ENCODE measurements at regions of chrX and their contacts with region 1.

Region 1: DNA sequence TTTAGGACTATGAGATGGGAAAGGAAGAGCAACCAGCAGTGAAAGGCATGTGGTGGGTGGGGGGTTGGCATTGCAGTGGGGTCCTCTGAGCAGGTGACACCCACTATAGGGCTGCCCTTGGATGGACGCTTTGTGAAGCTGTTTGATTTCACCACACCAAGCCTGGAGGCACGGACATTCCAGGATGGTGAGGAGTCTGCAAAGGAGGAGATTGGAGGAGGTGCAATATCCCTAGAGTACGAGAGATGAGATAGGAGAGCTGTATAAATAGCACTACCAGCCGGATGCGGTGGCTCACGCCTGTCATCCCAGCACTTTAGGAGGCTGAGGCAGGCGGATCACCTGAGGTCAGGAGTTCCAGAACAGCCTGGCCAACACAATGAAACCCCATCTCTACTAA is 42.3 kb downstream of the SHOX start:
- DNase-seq: no peak

Region 2: DNA sequence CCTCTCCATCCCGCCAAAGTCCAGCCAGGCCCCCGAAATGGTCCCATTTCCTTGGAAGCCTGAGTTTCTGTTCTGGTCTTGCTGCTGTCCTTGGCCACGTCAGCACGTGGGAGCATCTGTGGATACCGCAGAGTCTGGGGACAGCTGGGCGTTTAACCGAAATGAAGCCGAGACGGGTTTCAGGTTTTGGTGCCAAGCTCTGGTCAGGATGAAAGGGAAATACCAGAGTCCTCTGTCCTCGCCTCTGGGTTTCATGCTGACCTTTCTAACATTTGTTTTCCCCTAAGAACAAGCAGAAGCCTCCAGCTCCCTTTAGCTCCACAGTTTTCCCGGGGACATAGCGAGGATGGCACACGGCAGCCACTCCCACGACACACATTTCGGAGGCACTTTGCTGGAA is 22.6 kb before region 1 on chrX:
- intact Hi-C with region 1: loop called in 1 of 2 experiments (anchors 1 kb)
- DNase-seq: no peak

Region 3: DNA sequence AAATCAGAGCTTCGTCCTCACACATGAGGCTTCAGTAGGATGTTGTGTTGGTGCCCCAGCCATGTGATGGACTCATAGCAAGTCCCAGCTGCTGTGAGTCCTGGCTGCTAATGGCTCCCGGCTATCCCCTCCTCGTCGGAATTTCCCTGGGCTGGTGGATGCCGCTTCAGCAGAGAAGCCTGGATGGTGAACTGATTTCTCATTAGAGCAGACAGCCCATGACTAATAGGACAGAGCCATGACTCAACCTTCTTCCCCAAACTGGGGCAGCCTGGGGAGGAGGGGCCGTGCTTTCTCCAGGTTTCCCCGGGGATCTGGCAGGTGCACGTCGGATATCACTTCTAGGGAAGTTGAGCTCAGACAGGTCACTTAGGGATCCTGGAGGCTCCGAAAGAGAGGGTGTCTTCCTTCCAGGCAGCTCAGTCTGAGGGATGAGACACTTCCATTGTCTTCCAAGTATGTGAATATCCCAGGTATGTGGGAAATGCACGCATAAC is 1054.6 kb after region 1 on chrX:
- intact Hi-C with region 1: loop called in 1 of 2 experiments (anchors 5 kb)
- DNase-seq: no peak